ENCODE measurements at regions of chr4 and their contacts with region 1.

Region 1: DNA sequence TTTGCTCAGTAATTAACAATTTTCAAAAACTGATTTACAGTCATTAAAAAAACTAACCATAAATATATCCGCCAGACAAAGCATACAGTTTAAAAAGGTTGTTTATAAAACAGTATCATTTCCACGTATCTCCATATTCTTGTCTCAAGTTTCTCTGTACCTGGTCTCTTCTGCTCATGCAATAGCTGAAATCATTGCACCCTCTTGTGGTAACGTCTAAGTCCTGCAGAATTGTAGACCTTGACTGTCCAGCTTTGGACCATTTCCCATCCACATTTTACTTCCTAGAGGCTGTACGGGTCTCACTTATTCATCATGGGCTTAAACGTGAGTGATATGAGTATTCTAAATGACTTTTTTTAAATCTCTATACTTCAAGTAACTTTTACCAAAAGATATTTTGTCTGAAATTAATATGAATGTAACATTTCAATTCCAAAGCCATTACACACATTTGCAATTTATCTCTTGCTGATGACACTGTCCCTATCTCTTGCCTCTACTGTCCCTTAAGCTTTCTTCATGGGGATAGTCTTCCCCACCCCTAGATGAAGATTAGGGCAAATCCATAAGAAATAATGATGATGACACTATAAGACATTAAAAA is 118.5 kb downstream of the BTC start:
- DNase-seq: peak in 4 of 5 donors; percentile 12 to 28 (median 20)
- H3K4me3 ChIP-seq: no peak overlapping the region
- H3K4me3 Mint-ChIP-seq: peak overlapping the region in 2 of 8 donors; percentile 2 to 5
- H3K27ac ChIP-seq: no peak overlapping the region
- H3K27ac Mint-ChIP-seq: no peak overlapping the region
- H3K4me1 ChIP-seq: no peaks in the 10 kb centered on the region
- H3K4me1 Mint-ChIP-seq: peaks cover 0 to 4% (median 3%) of the 10 kb centered on the region in 4 donors
- H3K27me3 ChIP-seq: no peaks in the 10 kb centered on the region
- H3K27me3 Mint-ChIP-seq: peaks cover 2 to 6% of the 10 kb centered on the region in 2 donors

Region 2: DNA sequence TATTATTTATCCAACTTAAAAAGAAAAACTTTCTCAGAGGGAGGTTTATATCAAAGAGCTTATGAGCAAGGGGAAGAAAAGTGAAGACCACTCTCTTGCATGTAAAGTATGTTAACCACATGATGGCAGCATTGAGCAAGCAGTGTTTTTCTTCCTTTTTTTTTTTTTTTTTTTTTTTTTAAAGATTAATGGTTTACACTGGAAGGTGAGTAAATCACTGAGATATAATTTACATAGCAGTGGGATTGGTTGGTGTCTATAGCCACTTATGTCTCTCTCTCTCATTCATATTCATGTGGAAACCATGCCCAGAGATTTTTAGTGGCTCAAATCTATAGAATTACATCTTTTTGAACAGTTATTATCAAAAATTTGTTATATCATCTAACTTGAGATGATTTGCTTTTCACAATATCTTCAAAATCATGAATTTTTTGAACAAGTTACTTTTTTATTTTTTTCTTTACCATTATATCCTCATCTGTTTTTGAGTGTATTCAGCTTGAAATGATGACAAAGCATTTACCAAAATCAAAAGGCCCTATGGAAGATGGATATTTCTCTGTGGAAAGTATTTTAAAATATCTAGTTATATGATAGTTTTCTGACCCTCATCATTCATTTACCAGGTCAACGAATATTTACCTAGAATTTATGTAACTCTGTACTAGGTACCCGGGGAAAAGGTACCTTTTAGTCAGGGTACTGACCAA is 486.3 kb before region 1 on chr4:
- CTCF ChIA-PET with region 1: no interaction called
- POLR2A ChIA-PET with region 1: no interaction called
- intact Hi-C with region 1: loop called (anchors 2 kb)
- DNase-seq: peak in 4 of 5 donors; percentile 17 to 34 (median 26)
- H3K4me3 ChIP-seq: no peak overlapping the region
- H3K4me3 Mint-ChIP-seq: no peak overlapping the region
- H3K27ac ChIP-seq: no peak overlapping the region
- H3K27ac Mint-ChIP-seq: no peak overlapping the region
- H3K4me1 ChIP-seq: no peaks in the 10 kb centered on the region
- H3K4me1 Mint-ChIP-seq: no peaks in the 10 kb centered on the region
- H3K27me3 ChIP-seq: no peaks in the 10 kb centered on the region
- H3K27me3 Mint-ChIP-seq: no peaks in the 10 kb centered on the region

Region 3: DNA sequence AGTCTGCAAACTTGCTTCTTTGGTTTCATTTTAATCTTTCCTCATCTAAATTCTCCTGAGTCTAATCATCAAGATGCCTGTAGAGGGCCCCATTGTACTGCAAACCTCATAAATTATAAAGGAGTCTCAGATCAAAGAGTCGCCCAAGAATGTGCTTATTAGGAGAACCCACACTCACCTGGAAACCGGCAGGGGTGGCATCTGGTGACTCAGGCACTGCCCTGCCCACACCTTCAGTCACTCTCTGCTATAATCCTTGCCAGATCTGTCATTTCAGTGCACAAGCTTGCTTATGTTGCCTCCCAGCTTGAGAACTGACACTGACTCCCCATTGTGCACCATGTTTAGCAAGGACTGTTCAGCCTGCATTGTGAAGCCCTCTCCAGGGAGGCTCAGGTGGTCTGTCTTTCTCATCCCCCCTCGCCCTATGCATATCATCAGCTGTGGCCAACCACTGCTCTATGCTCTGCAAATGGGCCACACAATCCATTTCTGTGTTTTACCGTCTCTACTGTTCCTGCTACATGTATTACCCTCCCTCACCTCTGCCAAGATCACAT is 355.1 kb before region 1 on chr4:
- CTCF ChIA-PET with region 1: interaction called, 4 read pairs
- POLR2A ChIA-PET with region 1: no interaction called
- intact Hi-C with region 1: loop called (anchors 1 kb)
- DNase-seq: peak; percentile 4 to 42 (median 8)
- H3K4me3 ChIP-seq: no peak overlapping the region
- H3K4me3 Mint-ChIP-seq: no peak overlapping the region
- H3K27ac ChIP-seq: no peak overlapping the region
- H3K27ac Mint-ChIP-seq: peak overlapping the region in 1 of 7 donors; percentile 3
- H3K4me1 ChIP-seq: no peaks in the 10 kb centered on the region
- H3K4me1 Mint-ChIP-seq: no peaks in the 10 kb centered on the region
- H3K27me3 ChIP-seq: no peaks in the 10 kb centered on the region
- H3K27me3 Mint-ChIP-seq: peaks cover 12 to 16% of the 10 kb centered on the region in 2 donors

Region 4: GRCh38 chr4:74376888-74377483 is 298.8 kb before region 1 on chr4:
- CTCF ChIA-PET with region 1: interaction called, 10 read pairs
- POLR2A ChIA-PET with region 1: no interaction called
- intact Hi-C with region 1: loop called (anchors 1 kb)
- DNase-seq: peak in 4 of 5 donors; percentile 32 to 43 (median 36)
- H3K4me3 ChIP-seq: no peak overlapping the region
- H3K4me3 Mint-ChIP-seq: no peak overlapping the region
- H3K27ac ChIP-seq: no peak overlapping the region
- H3K27ac Mint-ChIP-seq: no peak overlapping the region
- H3K4me1 ChIP-seq: no peaks in the 10 kb centered on the region
- H3K4me1 Mint-ChIP-seq: no peaks in the 10 kb centered on the region
- H3K27me3 ChIP-seq: no peaks in the 10 kb centered on the region
- H3K27me3 Mint-ChIP-seq: peaks cover 2% of the 10 kb centered on the region in 2 donors

Region 5: GRCh38 chr4:74623041-74623440 is 52.7 kb before region 1 on chr4:
- CTCF ChIA-PET with region 1: no interaction called
- POLR2A ChIA-PET with region 1: no interaction called
- intact Hi-C with region 1: loop called (anchors 1 kb)
- DNase-seq: peak in 3 of 5 donors; percentile 6 to 23 (median 9)
- H3K4me3 ChIP-seq: no peak overlapping the region
- H3K4me3 Mint-ChIP-seq: no peak overlapping the region
- H3K27ac ChIP-seq: no peak overlapping the region
- H3K27ac Mint-ChIP-seq: peak overlapping the region in 2 of 7 donors; percentile 2 to 13
- H3K4me1 ChIP-seq: peaks cover 24% of the 10 kb centered on the region
- H3K4me1 Mint-ChIP-seq: peaks cover 10 to 34% (median 18%) of the 10 kb centered on the region in 4 donors
- H3K27me3 ChIP-seq: no peaks in the 10 kb centered on the region
- H3K27me3 Mint-ChIP-seq: peaks cover 6% of the 10 kb centered on the region in 2 donors

Measured in CD4-positive, alpha-beta memory T cell (primary cell).